Aorta (tissue), 5 donors: ENCODE measurements at regions of chr3 and their contacts with region 1.

Region 1: DNA sequence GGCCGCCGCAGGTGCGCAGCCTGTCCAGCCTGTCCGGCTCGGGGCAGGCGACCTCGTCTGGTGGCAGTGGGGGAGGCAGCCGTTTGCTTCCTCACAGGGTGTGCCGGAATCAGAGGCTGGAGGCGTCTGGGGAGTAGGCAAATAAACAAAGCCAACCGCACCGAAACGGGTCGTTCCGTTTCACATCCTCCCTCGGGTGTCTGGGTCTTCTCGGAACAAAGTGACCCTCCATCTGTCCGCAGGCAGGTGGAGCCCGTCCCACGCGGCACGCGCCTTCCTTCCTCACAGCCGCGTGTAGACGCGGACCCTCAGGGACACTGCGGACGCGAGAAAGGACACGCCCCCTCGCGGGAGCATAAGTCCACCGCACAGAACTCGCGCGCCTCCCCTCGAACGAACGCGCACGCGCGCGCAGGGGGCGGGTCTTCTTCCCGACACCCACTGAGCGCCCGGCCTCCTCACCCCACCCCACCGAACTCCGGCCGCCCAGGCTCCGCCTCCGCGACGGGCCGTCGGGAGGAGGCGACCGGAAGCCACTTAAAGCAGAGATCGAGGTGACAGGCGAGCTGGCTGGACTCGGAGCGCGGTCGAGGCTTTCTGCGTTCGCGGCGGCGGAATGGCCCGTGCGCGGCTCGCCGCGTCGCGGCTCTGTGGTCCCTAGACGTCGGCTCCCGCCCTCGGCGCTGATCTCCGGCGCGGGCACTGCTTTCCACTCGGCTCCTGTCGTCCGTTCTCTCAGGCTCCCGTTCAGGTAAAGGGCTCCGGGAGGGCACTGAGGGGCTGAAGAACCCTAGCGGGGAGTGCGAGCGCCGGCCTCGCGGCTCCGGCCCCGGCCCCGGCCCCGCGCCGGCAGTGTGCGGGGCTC is at the start of gene TIPARP:
- DNase-seq: peak; percentile 100
- ATAC-seq: peak; percentile 99
- H3K4me3 ChIP-seq: peak within 1 kb of the TSS; percentile 88 to 90
- H3K27ac ChIP-seq: peak within 1 kb of the TSS; percentile 31 to 92
- H3K4me1 ChIP-seq: peaks cover 0 to 1% of the 10 kb centered on the region in 2 donors
- H3K27me3 ChIP-seq: no peaks in the 10 kb centered on the region
- total RNA-seq, gene TIPARP: 23.2 to 24.2 TPM

Region 2: DNA sequence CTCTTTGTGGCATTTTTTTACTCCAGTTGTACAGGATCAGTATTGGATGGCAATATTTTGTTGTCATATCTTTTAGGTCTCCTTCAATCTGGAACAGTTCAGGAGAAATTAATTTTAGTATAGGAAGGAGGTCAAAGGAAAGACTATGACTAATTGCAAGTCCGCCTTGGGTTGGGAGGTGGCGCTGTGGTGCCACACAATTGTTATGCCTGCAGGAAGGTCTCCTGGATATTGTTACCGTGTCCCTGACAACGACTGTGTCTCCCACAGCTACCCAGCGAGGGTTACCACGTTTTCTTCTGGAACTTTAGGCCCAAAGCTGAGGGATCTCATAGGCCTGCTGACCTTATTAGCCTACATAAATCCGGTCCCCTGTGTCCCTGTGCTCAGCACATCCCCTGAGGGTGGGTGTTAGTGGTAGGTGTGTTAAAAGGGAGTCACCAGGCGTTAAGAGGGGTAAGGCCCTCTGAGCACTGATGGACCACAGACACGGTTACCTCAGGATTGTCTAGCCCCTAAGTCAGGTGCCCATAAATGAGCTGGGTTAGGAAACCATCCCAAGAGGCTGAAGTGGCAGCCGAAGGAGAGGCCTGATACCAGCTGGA is 522.4 kb before region 1 on chr3:
- intact Hi-C with region 1: loop called (anchors 2 to 10 kb)
- DNase-seq: peak; percentile 81 to 90
- ATAC-seq: peak; percentile 60
- H3K4me3 ChIP-seq: no peak overlapping the region
- H3K27ac ChIP-seq: peak overlapping the region in 1 of 2 donors; percentile 61
- H3K4me1 ChIP-seq: peaks cover 4 to 16% of the 10 kb centered on the region in 2 donors
- H3K27me3 ChIP-seq: no peaks in the 10 kb centered on the region

Region 3: DNA sequence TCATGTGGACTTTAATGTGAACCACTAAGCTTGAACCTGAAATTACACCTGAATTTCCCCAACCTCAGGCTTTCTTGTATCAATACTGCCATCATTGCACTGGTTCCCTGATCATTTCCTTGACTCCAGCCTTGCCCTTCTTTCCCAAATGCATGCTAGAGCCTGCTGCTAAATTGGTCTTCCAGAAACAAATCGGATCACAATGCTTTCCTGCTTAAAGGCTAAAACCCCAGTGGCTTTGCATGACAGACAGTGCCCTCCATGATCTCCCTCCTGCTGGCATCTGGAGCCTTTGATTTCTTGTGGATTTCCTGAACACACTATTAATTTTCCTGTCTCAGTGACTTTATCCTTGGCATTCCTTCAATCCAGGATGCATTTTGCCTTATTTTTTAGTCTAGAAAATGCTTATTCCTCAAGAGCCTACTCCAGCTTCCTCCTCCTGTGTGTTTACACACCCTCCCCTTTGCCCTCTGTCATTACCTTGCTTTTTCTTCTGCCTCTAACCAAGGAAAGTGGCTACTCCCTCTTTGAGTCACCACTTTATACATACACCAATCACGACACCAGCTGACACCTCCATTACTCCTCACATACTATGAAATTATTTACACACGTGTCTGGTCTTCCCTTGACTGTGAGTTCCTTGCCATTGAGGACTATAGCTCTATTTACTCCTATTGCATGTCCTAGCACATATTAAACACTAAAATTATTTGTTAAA is 339.3 kb before region 1 on chr3:
- intact Hi-C with region 1: no loop called
- DNase-seq: no peak
- ATAC-seq: no peak
- H3K4me3 ChIP-seq: no peak overlapping the region
- H3K27ac ChIP-seq: no peak overlapping the region
- H3K4me1 ChIP-seq: peaks cover 0 to 4% of the 10 kb centered on the region in 2 donors
- H3K27me3 ChIP-seq: no peaks in the 10 kb centered on the region

Region 4: DNA sequence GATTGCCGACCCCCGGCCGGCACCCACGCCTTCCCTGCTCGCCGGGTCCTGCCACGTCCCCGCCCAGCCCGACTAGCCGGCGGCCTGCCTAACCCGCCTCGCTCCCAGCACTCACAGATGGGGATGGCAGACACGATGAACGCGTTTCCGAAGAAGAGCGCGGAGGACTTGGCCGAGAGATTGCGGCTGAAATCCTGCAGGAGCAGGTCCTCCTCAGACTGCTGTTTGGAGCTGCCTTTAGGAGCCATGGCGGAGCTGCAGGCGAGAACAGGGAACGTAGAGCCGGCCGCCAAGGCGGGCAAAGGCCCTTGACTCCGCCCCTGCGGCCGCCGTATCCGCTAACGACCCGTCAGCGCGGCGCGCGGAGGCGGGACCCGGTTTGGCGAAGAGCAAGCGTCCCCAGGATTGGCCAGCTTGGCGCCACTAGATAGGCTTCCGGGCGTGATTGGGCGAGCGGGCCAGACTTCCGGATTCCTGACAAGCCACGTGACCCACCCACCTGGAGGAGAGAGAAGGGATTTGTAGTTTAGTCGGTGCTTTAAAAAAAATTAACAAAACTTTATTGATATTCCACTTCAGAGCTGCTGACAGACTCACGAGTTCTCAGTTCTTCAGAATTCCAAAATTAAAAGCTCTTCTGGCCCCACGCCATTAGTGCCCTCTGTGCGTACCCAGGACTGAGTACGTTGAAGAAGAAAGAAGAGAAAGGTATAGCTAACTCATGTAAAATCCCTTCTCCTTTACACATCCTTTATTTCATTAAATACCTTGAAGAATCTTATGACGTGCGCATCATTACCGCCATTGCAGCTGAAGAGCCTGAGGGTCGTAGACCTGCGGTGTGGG is 119.2 kb before region 1 on chr3 and contains the start of gene SSR3:
- intact Hi-C with region 1: loop called (anchors 1 to 5 kb)
- DNase-seq: peak; percentile 100
- ATAC-seq: peak; percentile 100
- H3K4me3 ChIP-seq: peak within 1 kb of the TSS; percentile 43 to 61
- H3K27ac ChIP-seq: peak within 1 kb of the TSS in 1 of 2 donors; percentile 70
- H3K4me1 ChIP-seq: peaks cover 2 to 4% of the 10 kb centered on the region in 2 donors
- H3K27me3 ChIP-seq: no peaks in the 10 kb centered on the region
- total RNA-seq, gene SSR3: 120 to 135 TPM

Region 5: GRCh38 chr3:156605686-156606605 is 68.3 kb before region 1 on chr3:
- intact Hi-C with region 1: loop called in 1 of 2 experiments (anchors 5 kb)
- DNase-seq: peak; percentile 80 to 81
- ATAC-seq: peak; percentile 87
- H3K4me3 ChIP-seq: peak overlapping the region; percentile 27 to 63
- H3K27ac ChIP-seq: peak overlapping the region in 1 of 2 donors; percentile 88
- H3K4me1 ChIP-seq: no peaks in the 10 kb centered on the region
- H3K27me3 ChIP-seq: no peaks in the 10 kb centered on the region

Region 6: DNA sequence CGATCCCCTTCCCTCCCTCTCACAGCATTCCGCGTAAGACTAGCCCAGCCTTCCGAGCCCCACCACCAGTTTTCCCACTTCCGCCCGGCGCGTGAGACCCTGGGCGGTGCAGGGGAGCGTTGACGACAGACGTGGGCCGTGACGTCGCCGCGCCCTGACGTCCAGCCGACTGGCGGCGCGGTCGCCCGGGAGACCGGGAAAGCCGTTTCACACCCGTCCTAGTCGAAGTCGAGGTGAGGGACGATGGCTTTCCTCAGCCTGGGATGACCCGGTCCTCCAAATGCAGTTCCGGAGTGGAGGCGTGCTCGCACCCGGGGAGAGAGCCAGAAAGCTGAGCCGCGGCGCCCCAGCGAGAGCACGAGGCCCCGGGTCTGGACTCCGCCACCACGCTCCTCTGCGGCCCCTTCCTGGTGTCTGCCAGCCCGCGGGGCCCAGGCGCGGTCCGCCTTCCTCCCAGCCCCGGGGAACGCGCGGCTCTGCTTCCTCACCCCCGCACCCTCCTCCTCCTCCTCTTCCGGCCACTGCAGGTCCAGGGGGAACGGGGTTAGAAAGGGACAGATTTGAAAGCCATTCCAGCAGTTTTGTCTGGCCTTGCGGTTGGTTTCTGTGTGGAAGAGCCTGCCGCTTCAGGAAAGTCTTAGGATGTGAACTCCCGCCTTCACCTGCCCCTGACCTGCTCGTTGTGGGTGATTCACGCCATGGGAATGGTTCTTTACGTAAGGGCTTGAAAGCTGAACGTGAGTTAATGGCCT is 152.0 kb after region 1 on chr3 and contains the start of gene LEKR1:
- intact Hi-C with region 1: loop called in 1 of 2 experiments (anchors 5 kb)
- DNase-seq: peak; percentile 91 to 93
- ATAC-seq: peak; percentile 95
- H3K4me3 ChIP-seq: peak within 1 kb of the TSS; percentile 52 to 79
- H3K27ac ChIP-seq: peak within 1 kb of the TSS in 1 of 2 donors; percentile 84
- H3K4me1 ChIP-seq: no peaks in the 10 kb centered on the region
- H3K27me3 ChIP-seq: no peaks in the 10 kb centered on the region
- total RNA-seq, gene LEKR1: 0.30 to 1.3 TPM

Region 7: GRCh38 chr3:157088601-157089454 is 414.6 kb after region 1 on chr3:
- intact Hi-C with region 1: loop called in 1 of 2 experiments (anchors 5 kb)
- DNase-seq: peak; percentile 98
- ATAC-seq: peak; percentile 96
- H3K4me3 ChIP-seq: peak overlapping the region; percentile 1 to 31
- H3K27ac ChIP-seq: peak overlapping the region; percentile 72 to 94
- H3K4me1 ChIP-seq: peaks cover 5 to 11% of the 10 kb centered on the region in 2 donors
- H3K27me3 ChIP-seq: no peaks in the 10 kb centered on the region

Region 8: DNA sequence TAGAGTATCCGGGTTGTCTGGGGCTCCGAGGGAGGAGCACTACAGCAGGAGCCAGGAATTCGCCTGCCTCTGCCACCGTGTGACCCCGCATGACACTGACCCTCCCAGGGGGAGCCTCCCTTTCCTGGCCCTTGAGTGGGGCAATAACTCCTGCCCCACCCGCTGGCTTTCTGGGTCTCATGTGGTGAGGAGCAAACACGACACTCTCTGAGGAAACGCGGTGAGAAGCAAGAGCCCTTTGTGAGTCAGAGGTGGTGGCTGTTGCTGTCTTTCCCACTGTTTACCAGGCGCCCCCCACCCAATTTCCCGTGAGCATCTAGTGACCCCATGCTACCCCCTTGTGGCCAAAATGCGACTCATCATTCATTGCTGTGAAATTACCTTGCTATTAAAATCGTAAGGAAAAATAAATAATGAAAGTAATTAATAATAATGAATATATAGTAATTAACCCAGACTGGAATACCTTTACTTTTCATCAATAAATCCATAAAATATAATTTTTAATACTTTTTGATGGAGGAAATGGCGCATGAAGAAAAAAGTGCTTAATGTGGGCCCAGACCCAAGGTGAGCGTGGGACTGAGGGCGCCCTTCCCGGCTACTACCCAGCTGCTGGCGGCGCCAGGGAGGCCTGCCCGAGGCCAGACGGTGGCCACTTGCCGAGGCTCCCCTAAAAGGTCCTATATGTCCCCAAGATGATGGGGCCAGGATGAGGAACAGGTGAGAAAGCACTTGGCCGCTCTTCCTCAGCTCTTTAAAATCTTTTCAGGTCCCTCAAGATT is 456.4 kb after region 1 on chr3:
- intact Hi-C with region 1: loop called (anchors 10 kb)
- DNase-seq: peak; percentile 49 to 76
- ATAC-seq: no peak
- H3K4me3 ChIP-seq: no peak overlapping the region
- H3K27ac ChIP-seq: no peak overlapping the region
- H3K4me1 ChIP-seq: peaks cover 0 to 3% of the 10 kb centered on the region in 2 donors
- H3K27me3 ChIP-seq: no peaks in the 10 kb centered on the region

Region 9: GRCh38 chr3:157369727-157370421 is 695.6 kb after region 1 on chr3:
- intact Hi-C with region 1: no loop called
- DNase-seq: no peak
- ATAC-seq: no peak
- H3K4me3 ChIP-seq: no peak overlapping the region
- H3K27ac ChIP-seq: no peak overlapping the region
- H3K4me1 ChIP-seq: peaks cover 0 to 6% of the 10 kb centered on the region in 2 donors
- H3K27me3 ChIP-seq: no peaks in the 10 kb centered on the region